ENCODE measurements at regions of chr18 and their contacts with region 1.

Region 1: GRCh38 chr18:47204908-47205522 is 28.9 kb upstream of the IER3IP1 start:
- DNase-seq: no peak
- ATAC-seq: no peak
- H3K4me3 Mint-ChIP-seq: no peak overlapping the region
- H3K27ac Mint-ChIP-seq: no peak overlapping the region
- H3K4me1 Mint-ChIP-seq: no peaks in the 10 kb centered on the region
- H3K27me3 Mint-ChIP-seq: peaks cover 18% of the 10 kb centered on the region
- CTCF ChIP-seq: peak; percentile 25

Region 2: DNA sequence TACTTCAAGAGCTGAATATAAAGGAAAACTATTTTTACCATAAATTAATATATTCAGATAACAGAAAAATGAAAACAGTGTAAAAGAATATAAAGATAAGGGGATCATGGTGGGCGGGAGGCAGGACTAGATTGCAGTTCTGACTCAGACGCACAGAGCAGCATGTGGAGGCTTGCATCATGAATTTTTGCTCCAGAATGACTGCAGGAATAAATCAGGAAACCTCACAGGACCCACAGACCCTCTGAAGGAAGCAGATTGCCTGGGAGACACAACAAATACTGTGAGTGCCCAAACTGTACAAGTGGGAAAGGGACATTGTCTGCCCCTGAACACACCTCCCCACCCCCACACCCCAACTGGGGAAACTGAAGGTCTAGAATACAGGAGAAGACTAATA is 1398.8 kb before region 1 on chr18:
- CTCF ChIA-PET with region 1: no interaction called
- POLR2A ChIA-PET with region 1: no interaction called
- intact Hi-C with region 1: no loop called
- DNase-seq: no peak
- ATAC-seq: no peak
- H3K4me3 Mint-ChIP-seq: no peak overlapping the region
- H3K27ac Mint-ChIP-seq: no peak overlapping the region
- H3K4me1 Mint-ChIP-seq: no peaks in the 10 kb centered on the region
- H3K27me3 Mint-ChIP-seq: peaks cover 18% of the 10 kb centered on the region
- CTCF ChIP-seq: no peak

Region 3: GRCh38 chr18:47050468-47050867 is 154.5 kb before region 1 on chr18:
- CTCF ChIA-PET with region 1: interaction called, 49 read pairs
- POLR2A ChIA-PET with region 1: no interaction called
- intact Hi-C with region 1: no loop called
- DNase-seq: no peak
- ATAC-seq: peak; percentile 28
- H3K4me3 Mint-ChIP-seq: no peak overlapping the region
- H3K27ac Mint-ChIP-seq: no peak overlapping the region
- H3K4me1 Mint-ChIP-seq: no peaks in the 10 kb centered on the region
- H3K27me3 Mint-ChIP-seq: peaks cover 3% of the 10 kb centered on the region
- CTCF ChIP-seq: no peak

Region 4: GRCh38 chr18:47100214-47100831 is 104.7 kb before region 1 on chr18:
- CTCF ChIA-PET with region 1: interaction called, 31 read pairs
- POLR2A ChIA-PET with region 1: no interaction called
- intact Hi-C with region 1: loop called (anchors 1 kb)
- DNase-seq: peak; percentile 24
- ATAC-seq: peak; percentile 42
- H3K4me3 Mint-ChIP-seq: no peak overlapping the region
- H3K27ac Mint-ChIP-seq: no peak overlapping the region
- H3K4me1 Mint-ChIP-seq: no peaks in the 10 kb centered on the region
- H3K27me3 Mint-ChIP-seq: no peaks in the 10 kb centered on the region
- CTCF ChIP-seq: peak; percentile 85

Region 5: DNA sequence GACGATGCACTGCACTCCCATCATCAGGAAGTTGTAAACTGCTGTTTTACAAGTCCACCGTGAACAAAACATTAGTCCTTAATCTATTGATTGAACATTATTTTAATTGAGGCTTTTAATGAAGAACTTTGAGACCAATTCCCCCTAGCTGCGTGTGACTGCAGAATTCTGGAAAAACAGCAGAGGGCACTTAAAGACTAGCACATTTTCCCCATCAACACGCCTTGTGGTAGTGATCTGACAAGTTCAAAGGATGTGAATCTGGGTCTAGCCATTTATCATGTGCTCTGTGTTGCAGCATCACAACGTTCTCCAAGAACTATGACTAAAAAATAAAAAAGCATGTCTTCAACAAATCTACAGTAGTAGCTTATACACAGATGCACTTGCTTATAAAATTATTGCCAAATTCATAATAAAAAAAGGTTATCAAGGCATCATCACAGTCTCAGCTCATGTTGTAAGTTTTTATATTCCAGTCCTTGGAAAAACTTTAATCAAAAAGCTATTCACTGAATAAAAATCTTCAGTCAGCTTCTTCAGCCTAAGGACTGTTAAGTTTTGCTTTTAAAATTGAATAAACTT is 10.6 kb after region 1 on chr18:
- CTCF ChIA-PET with region 1: interaction called, 11 read pairs
- POLR2A ChIA-PET with region 1: no interaction called
- intact Hi-C with region 1: no loop called
- DNase-seq: no peak
- ATAC-seq: peak; percentile 31
- H3K4me3 Mint-ChIP-seq: no peak overlapping the region
- H3K27ac Mint-ChIP-seq: no peak overlapping the region
- H3K4me1 Mint-ChIP-seq: no peaks in the 10 kb centered on the region
- H3K27me3 Mint-ChIP-seq: peaks cover 36% of the 10 kb centered on the region
- CTCF ChIP-seq: no peak

Region 6: GRCh38 chr18:47263430-47264307 is 58.7 kb after region 1 on chr18:
- CTCF ChIA-PET with region 1: no interaction called
- POLR2A ChIA-PET with region 1: no interaction called
- intact Hi-C with region 1: no loop called
- DNase-seq: no peak
- ATAC-seq: no peak
- H3K4me3 Mint-ChIP-seq: no peak overlapping the region
- H3K27ac Mint-ChIP-seq: no peak overlapping the region
- H3K4me1 Mint-ChIP-seq: peaks cover 2% of the 10 kb centered on the region
- H3K27me3 Mint-ChIP-seq: peaks cover 71% of the 10 kb centered on the region
- CTCF ChIP-seq: no peak

Region 7: DNA sequence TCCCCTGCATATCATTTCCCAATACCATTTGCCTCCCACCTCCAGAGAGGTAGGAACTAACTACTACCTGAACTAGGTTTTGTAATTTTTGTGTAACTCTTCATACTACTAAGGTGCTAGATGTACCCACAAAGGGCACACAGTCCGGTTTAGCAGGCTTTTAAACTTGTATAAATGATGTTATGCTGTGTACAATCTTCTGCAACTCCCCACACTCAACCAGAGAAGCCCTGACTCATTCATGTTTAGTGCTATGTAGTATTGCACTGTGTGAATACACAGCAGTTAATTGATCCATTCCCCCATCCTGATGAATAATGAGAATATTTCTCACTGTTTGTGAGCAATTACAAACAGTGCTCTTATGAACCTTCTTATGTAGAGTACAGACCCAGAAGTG is 439.9 kb after region 1 on chr18:
- CTCF ChIA-PET with region 1: no interaction called
- POLR2A ChIA-PET with region 1: no interaction called
- intact Hi-C with region 1: no loop called
- DNase-seq: no peak
- ATAC-seq: no peak
- H3K4me3 Mint-ChIP-seq: no peak overlapping the region
- H3K27ac Mint-ChIP-seq: no peak overlapping the region
- H3K4me1 Mint-ChIP-seq: peaks cover 5% of the 10 kb centered on the region
- H3K27me3 Mint-ChIP-seq: no peaks in the 10 kb centered on the region
- CTCF ChIP-seq: no peak

Region 8: DNA sequence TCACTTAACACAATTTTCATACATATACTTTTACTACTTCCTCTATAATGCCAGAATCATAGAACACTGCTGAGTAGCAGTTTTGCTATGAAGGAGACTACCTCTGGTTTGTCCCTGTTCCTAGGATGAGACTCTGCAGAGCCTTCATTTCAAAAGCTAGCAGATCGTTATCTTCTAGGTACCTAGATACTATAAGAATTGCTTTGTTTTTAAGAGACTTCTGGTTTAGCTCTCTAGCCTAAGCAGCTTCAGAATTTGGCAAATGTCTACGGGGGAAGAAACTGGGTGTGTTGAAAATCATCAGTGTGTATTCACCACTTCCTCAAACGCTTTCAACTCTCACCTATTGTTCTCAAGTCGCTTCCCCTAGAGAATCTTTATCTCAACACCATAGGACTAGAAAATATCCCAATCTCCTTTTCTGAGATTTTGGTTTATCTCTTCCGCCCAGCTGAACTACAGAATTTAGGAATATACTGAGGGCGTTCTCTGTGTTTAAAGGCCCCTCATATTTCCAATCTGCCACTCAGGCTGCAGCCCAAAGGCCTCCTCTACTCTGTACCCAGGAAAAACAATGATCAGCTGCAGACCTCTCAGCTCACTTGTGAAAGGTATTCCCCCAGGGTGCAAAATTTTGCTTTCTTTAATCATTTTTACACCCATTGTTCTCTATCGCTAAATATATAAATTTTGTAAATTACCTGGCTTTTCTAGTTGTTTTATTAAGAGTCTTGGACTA is 696.8 kb after region 1 on chr18:
- CTCF ChIA-PET with region 1: no interaction called
- POLR2A ChIA-PET with region 1: no interaction called
- intact Hi-C with region 1: no loop called
- DNase-seq: no peak
- ATAC-seq: peak; percentile 91
- H3K4me3 Mint-ChIP-seq: peak overlapping the region; percentile 17
- H3K27ac Mint-ChIP-seq: peak overlapping the region; percentile 42
- H3K4me1 Mint-ChIP-seq: peaks cover 25% of the 10 kb centered on the region
- H3K27me3 Mint-ChIP-seq: peaks cover 23% of the 10 kb centered on the region
- CTCF ChIP-seq: no peak

Measured in activated B cell treated with CpG ODN at 0.5 μM for 24 hours (primary cell).